T-cell (primary cell): ENCODE measurements at regions of chr2 and their contacts with region 1.

Region 1: GRCh38 chr2:157327621-157328500 is 2.2 kb upstream of the ERMN start:
- DNase-seq: peak; percentile 61 to 94 (median 81)
- ATAC-seq: peak; percentile 86 to 92 (median 91)
- H3K4me3 ChIP-seq: no peak overlapping the region
- H3K4me3 Mint-ChIP-seq: peak overlapping the region; percentile 40 to 55 (median 55)
- H3K27ac ChIP-seq: peak overlapping the region; percentile 44
- H3K27ac Mint-ChIP-seq: peak overlapping the region; percentile 87 to 91
- H3K4me1 ChIP-seq: peaks cover 33 to 39% of the 10 kb centered on the region in 2 experiments
- H3K4me1 Mint-ChIP-seq: peaks cover 54 to 56% (median 54%) of the 10 kb centered on the region in 3 donors
- H3K27me3 ChIP-seq: no peaks in the 10 kb centered on the region
- H3K27me3 Mint-ChIP-seq: no peaks in the 10 kb centered on the region

Region 2: DNA sequence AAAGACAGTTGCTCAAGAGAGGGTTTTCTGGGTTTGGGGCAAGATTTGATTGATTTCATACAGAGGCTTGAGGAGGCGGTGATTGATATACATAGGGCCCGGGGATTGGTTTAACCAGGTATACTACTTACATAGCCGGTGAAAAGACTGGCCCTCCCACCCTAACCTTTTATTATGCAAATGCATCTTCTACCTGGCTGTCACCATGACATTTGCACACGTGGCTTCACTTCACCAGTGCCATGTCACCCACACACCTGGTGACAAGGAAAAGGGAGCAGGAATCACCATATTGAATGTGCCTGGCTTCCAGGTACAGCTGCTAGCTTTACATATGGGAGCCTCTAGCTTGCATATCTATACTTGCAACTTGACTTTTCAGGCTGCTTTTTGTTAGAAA is 12.0 kb before region 1 on chr2:
- CTCF ChIA-PET with region 1: interaction called, 6 to 10 read pairs
- POLR2A ChIA-PET with region 1: no interaction called
- DNase-seq: no peak
- ATAC-seq: no peak
- H3K4me3 ChIP-seq: no peak overlapping the region
- H3K4me3 Mint-ChIP-seq: no peak overlapping the region
- H3K27ac ChIP-seq: no peak overlapping the region
- H3K27ac Mint-ChIP-seq: no peak overlapping the region
- H3K4me1 ChIP-seq: no peaks in the 10 kb centered on the region
- H3K4me1 Mint-ChIP-seq: no peaks in the 10 kb centered on the region
- H3K27me3 ChIP-seq: no peaks in the 10 kb centered on the region
- H3K27me3 Mint-ChIP-seq: peaks cover 0 to 2% of the 10 kb centered on the region in 2 donors

Region 3: DNA sequence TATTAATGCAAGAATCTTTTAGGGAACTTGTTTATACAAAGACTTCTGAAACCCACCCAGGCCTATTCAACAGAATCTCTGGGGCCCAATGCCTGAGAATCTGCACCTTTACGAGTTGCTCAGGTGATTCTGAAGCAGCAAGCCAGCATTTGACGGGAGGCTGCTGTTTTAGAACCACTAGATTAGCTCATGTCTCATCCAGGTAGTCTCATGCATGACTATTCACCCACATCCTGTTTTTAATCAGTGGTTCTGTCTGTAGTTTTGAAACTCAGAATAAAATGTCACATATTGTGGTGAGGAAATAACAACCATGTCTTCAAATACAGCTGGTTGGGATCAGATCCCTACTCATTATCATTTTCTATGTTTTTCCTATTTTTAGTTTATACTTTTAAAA is 76.5 kb after region 1 on chr2:
- CTCF ChIA-PET with region 1: interaction called, 7 to 13 read pairs
- POLR2A ChIA-PET with region 1: interaction called, 3 read pairs
- DNase-seq: peak; percentile 33 to 89 (median 69)
- ATAC-seq: peak; percentile 92 to 97 (median 94)
- H3K4me3 ChIP-seq: no peak overlapping the region
- H3K4me3 Mint-ChIP-seq: peak overlapping the region; percentile 14 to 67 (median 59)
- H3K27ac ChIP-seq: peak overlapping the region; percentile 97
- H3K27ac Mint-ChIP-seq: peak overlapping the region; percentile 99 to 100
- H3K4me1 ChIP-seq: peaks cover 32 to 36% of the 10 kb centered on the region in 2 experiments
- H3K4me1 Mint-ChIP-seq: peaks cover 68 to 81% (median 73%) of the 10 kb centered on the region in 3 donors
- H3K27me3 ChIP-seq: no peaks in the 10 kb centered on the region
- H3K27me3 Mint-ChIP-seq: no peaks in the 10 kb centered on the region

Region 4: GRCh38 chr2:157420771-157421323 is 93.0 kb after region 1 on chr2:
- CTCF ChIA-PET with region 1: interaction called, 8 to 11 read pairs
- POLR2A ChIA-PET with region 1: interaction called, 4 to 6 read pairs
- DNase-seq: peak in 1 of 35 experiments; percentile 53
- ATAC-seq: peak in 2 of 4 experiments; percentile 2 to 9
- H3K4me3 ChIP-seq: no peak overlapping the region
- H3K4me3 Mint-ChIP-seq: peak overlapping the region in 2 of 3 donors; percentile 24 to 60
- H3K27ac ChIP-seq: peak overlapping the region; percentile 91
- H3K27ac Mint-ChIP-seq: peak overlapping the region; percentile 90 to 93
- H3K4me1 ChIP-seq: peaks cover 48 to 77% of the 10 kb centered on the region in 2 experiments
- H3K4me1 Mint-ChIP-seq: peaks cover 72 to 80% (median 74%) of the 10 kb centered on the region in 3 donors
- H3K27me3 ChIP-seq: no peaks in the 10 kb centered on the region
- H3K27me3 Mint-ChIP-seq: no peaks in the 10 kb centered on the region

Region 5: GRCh38 chr2:157492189-157492773 is 164.4 kb after region 1 on chr2:
- CTCF ChIA-PET with region 1: interaction called, 9 to 12 read pairs
- POLR2A ChIA-PET with region 1: interaction called in 1 of 2 experiments, 3 read pairs
- DNase-seq: peak; percentile 45 to 83 (median 64)
- ATAC-seq: peak; percentile 86 to 91 (median 88)
- H3K4me3 ChIP-seq: no peak overlapping the region
- H3K4me3 Mint-ChIP-seq: no peak overlapping the region
- H3K27ac ChIP-seq: no peak overlapping the region
- H3K27ac Mint-ChIP-seq: peak overlapping the region in 1 of 2 donors; percentile 40
- H3K4me1 ChIP-seq: peaks cover 0 to 6% of the 10 kb centered on the region in 2 experiments
- H3K4me1 Mint-ChIP-seq: peaks cover 46 to 54% (median 49%) of the 10 kb centered on the region in 3 donors
- H3K27me3 ChIP-seq: no peaks in the 10 kb centered on the region
- H3K27me3 Mint-ChIP-seq: no peaks in the 10 kb centered on the region

Region 6: DNA sequence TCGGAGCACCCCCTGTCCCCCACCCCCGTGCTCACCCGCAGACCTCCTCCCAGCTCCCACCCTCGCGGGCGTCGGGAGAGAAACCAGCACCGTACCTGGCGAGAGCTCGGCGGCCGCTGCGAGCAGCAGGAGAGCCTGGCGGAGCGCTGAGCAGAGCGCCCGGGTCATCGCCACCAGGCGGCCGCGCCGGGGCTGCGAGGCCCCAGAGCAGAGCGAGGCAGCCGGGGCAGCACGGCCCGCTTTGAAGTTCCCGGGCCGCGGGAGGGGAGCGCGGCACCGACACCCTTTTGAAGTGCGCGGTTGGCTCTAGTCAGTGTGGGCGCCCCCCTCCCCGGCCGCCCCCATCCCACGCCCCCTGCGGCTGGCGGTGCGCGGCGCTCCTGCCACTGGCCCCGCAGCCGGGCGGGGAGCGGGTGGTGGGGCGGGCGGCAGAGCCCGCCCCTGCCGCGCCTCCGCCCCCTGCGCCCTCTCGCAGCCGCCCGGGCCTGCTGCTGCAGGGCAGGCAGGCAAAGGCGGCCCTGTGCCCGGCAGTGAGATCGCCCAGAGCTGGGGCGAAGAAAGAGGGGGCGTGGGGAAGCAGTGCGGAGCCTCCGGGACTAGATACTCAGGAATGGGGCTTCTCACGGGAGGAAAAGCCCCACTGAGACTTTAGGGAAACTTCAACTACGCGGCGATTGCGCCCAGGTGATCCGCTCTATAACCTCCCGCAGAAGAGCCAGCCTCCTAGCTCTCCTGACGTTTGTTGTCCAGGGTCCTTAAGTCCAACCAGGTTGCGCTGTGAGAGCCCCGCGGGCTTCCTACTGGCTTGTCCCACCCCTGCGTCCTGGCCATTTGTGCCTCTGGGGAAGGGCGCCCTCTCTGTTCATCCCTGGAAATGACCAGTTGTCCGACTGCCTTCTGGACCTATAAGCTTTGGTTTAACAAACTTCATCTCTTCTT is 300.9 kb after region 1 on chr2 and contains the start of gene ACVR1C:
- CTCF ChIA-PET with region 1: interaction called, 3 to 10 read pairs
- POLR2A ChIA-PET with region 1: no interaction called
- DNase-seq: peak; percentile 35 to 81 (median 59)
- ATAC-seq: peak; percentile 81 to 87 (median 87)
- H3K4me3 ChIP-seq: peak within 1 kb of the TSS; percentile 76 to 84
- H3K4me3 Mint-ChIP-seq: peak within 1 kb of the TSS; percentile 93 to 98 (median 94)
- H3K27ac ChIP-seq: peak within 1 kb of the TSS; percentile 50
- H3K27ac Mint-ChIP-seq: peak within 1 kb of the TSS; percentile 88 to 93
- H3K4me1 ChIP-seq: peaks cover 5 to 18% of the 10 kb centered on the region in 2 experiments
- H3K4me1 Mint-ChIP-seq: peaks cover 39 to 41% (median 40%) of the 10 kb centered on the region in 3 donors
- H3K27me3 ChIP-seq: peaks cover 0 to 10% of the 10 kb centered on the region in 2 experiments
- H3K27me3 Mint-ChIP-seq: no peaks in the 10 kb centered on the region
- total RNA-seq, gene ACVR1C: 3.6 to 5.7 (median 5.2) TPM